ENCODE measurements at regions of chr11 and their contacts with region 1.

Region 1: DNA sequence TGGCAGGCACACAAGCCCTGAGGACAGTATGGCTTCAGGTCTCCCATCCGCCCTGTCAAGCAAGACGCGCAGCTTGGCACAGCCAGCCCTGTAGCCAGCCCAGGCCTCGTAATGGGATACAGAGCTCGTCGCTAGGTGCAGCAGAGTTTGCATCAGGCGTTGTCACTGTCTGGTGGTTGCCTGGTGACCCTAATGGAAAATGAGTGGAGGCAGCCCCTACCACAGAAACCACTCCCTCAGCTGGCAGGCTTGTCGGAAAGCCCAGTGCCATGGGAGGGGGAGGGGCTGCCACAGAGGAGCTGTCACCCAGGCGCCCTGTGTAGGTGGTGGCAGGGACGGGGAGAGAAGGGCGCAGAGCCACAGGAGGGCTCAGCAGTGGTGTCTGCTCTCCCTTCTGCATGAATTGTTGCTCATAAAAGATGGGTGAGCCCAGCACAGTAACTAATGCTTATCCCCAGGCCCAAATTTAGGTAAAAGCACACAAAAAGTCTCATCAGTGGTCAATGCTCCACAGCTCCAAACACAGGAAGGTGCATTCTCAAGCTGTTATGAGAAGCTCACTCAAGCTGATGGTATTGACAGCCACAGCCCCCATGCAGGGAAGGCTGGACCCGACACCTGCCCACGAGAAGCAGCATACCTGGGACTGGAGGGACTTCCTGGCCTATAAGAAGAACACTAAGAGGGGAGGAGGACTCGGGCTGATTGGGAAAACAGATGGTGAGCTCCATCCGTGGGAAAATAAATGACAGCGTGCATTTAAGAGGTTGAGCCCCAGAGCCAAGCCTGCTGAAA is 164.6 kb downstream of the ETS1 start:
- DNase-seq: peak; percentile 64
- H3K4me3 Mint-ChIP-seq: peak overlapping the region; percentile 69
- H3K27ac Mint-ChIP-seq: peak overlapping the region; percentile 92
- H3K4me1 Mint-ChIP-seq: peaks cover 38% of the 10 kb centered on the region
- H3K27me3 Mint-ChIP-seq: no peaks in the 10 kb centered on the region

Region 2: GRCh38 chr11:128323381-128323780 is 99.4 kb before region 1 on chr11:
- intact Hi-C with region 1: loop called (anchors 1 kb)
- DNase-seq: no peak
- H3K4me3 Mint-ChIP-seq: peak overlapping the region; percentile 70
- H3K27ac Mint-ChIP-seq: peak overlapping the region; percentile 95
- H3K4me1 Mint-ChIP-seq: peaks cover 91% of the 10 kb centered on the region
- H3K27me3 Mint-ChIP-seq: no peaks in the 10 kb centered on the region

Region 3: DNA sequence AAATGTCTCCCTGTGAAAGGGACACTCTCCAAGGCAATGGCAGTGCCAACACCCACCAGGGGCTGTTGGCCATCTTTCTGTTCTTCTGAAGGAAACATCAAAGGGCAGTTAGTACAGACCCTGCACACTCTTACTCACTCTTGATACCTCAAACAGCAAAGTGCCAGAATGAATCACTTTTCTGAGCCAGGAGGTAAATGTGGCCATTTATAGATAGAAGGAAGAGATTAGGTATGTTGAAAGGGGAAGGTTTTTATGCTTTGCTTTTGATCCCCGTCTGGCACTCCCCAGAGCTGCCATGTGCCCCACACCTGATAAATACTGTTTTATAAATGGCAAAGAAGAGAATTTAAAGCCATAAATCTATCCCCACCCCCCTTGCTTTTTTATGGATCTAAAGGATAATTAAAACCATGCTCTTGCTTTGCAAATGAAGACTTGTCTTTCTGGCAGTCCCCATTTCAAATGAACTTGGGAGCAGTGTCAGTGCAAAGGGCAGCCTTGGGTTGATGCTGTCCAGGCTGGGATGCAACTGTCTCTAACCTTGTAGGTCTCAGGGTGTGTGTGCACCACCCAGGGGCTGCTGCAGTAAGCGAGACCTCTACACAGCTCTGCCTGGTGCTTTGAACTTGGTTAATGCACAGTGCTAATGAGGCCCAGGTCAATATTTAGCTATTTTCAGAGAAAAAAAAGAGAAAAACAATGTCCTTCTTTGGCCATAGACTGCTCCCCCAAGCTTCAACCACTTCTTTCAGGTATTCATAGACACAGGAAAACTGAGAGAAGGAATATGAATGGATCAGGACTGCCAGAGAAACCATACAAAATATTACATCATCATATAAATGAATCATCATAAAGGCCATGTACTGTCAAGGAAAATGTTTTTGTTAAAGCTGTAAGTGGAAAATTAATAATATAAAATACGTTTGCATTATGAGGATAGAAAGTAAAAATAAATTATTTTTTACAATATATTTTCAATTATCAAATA is 42.9 kb before region 1 on chr11:
- intact Hi-C with region 1: loop called (anchors 1 kb)
- DNase-seq: peak; percentile 9
- H3K4me3 Mint-ChIP-seq: no peak overlapping the region
- H3K27ac Mint-ChIP-seq: peak overlapping the region; percentile 45
- H3K4me1 Mint-ChIP-seq: peaks cover 28% of the 10 kb centered on the region
- H3K27me3 Mint-ChIP-seq: no peaks in the 10 kb centered on the region

Region 4: DNA sequence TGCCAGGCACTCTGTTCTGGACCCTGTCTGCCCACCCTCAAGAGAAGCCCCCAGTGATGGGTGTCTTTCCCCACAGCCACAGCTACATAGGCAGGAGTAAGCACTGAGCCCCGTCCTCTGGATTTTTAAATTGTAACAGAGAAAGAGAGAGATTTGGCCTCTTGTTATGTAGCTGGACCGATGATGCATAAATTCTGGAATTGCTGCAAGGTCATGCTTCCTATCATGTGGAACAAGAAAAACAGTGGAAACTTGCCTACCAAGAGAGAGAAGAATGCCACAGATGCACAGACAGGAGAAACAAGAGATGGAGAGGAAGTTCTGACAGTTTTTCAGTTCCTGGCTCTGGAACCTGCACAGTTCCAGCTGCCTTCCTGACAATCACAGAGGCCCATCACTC is 14.4 kb after region 1 on chr11:
- intact Hi-C with region 1: loop called (anchors 2 kb)
- DNase-seq: no peak
- H3K4me3 Mint-ChIP-seq: no peak overlapping the region
- H3K27ac Mint-ChIP-seq: no peak overlapping the region
- H3K4me1 Mint-ChIP-seq: peaks cover 24% of the 10 kb centered on the region
- H3K27me3 Mint-ChIP-seq: no peaks in the 10 kb centered on the region

Region 5: GRCh38 chr11:128463371-128463829 is 40.6 kb after region 1 on chr11:
- intact Hi-C with region 1: loop called (anchors 2 kb)
- DNase-seq: no peak
- H3K4me3 Mint-ChIP-seq: peak overlapping the region; percentile 83
- H3K27ac Mint-ChIP-seq: peak overlapping the region; percentile 95
- H3K4me1 Mint-ChIP-seq: peaks cover 92% of the 10 kb centered on the region
- H3K27me3 Mint-ChIP-seq: no peaks in the 10 kb centered on the region

Measured in activated T-helper 1 cell treated with anti-CD3 and anti-CD28 coated beads, Interleukin-12 subunit alpha, Interleukin-12 subunit beta, Interleukin-2, Interleukin-4 antibody, amounts not matched to agents 30 ng/mL and 10 ng/mL and 1 ng/mL, durations not matched to agents 14 hours and 24 hours and 36 hours (primary cell).